ENCODE measurements at regions of chr9 and their contacts with region 1.

Region 1: DNA sequence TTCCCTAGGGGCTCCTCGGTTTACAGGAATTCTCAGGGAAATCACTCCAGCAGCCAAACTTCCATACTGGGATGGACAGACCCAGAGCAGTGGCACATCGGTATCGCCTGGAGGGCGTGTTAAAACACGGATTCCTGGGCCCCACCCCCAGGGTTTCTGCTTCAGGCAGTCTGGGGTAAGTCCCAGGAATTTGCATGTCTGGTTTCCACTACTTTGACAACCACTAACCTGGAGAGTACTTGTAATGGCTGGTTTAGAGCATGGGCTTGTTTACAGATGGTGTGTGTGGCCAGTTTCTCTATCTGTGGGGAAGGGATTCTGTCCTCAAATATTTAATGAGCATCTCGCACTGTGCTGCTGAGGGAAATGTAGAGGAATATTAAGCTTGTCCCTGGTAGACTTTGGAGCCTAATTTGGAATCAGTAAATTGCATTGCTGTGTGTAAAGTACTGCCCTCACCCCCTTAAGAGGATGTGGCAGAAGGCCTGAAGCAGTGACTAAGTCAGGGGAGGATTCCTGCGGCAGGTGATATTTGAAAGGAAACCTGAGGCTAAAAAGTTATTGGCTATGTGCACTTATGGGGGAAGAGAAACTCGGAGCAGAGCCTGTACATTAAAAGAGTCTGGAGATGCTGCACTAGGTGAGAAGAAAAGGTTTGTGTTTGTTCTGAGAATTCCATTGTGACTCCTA is 18.6 kb upstream of the TJP2 start:
- DNase-seq: no peak
- H3K4me3 ChIP-seq: no peak overlapping the region
- H3K27ac ChIP-seq: no peak overlapping the region
- H3K4me1 ChIP-seq: peaks cover 1% of the 10 kb centered on the region
- H3K27me3 ChIP-seq: no peaks in the 10 kb centered on the region
- CTCF ChIP-seq: no peak
- POLR2A ChIP-seq: no peak

Region 2: DNA sequence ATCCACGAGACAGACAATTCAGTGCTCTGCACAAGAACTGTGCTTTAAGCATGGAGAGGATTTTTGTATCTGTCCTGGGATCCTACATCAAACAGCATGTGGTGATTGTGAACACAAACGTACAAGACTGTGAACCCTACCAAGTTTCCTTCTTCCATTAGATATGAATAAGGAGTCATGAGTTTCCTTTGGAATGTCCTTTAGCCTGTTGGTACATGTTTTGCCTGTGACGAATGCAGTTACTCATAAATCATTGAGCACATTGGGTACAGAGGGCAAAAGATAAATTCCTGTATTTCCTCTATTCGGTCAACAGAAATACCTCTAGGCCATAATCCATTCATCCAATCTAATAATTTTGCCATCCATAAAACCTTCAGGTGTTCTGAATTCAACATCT is 58.4 kb before region 1 on chr9:
- CTCF ChIA-PET with region 1: no interaction called
- POLR2A ChIA-PET with region 1: interaction called, 12 read pairs
- dilution Hi-C with region 1: no loop called
- intact Hi-C with region 1: no loop called
- DNase-seq: peak; percentile 93
- H3K4me3 ChIP-seq: no peak overlapping the region
- H3K27ac ChIP-seq: peak overlapping the region; percentile 89
- H3K4me1 ChIP-seq: peaks cover 41% of the 10 kb centered on the region
- H3K27me3 ChIP-seq: no peaks in the 10 kb centered on the region
- CTCF ChIP-seq: no peak
- POLR2A ChIP-seq: peak; percentile 82

Region 3: DNA sequence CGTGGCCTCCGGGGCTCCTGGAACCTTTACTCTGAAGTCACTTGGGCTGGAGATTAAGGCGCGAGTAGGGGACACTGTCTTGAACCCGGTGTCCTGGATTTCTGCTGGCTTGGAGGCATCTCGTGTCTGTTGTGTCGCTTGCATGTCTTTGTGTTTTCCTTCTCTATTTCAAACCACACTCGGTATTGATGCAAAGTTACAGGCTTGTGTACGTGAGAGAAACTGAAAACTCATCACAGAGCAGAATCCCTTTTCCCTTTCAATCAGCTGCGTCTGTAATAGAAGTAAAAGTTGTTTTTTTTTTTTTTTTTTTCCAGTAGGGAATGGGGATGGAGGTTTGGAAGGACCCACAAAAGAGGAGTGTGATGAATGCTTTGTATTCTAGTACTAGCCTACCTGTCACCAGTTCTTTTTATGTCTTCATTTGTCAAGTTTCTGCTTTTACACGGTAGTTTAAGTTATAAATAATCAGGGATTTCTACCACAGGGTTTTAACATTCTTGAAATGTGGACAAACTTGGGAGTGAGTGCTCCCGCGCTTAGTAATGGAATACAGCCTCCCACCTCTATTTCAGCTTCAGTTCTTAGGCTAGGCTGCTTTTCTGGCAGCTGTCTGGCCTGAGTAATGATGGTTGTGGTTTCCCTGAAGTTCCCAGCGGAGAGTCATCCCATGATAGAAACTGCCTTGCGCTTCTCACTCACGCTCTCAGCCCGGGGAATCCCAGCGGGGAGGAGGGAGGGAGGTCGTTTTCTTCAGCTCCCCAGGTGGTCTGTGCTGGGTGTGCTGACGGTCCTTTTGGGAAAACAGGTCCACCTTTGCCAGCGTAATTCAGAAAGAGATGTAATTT is 19.4 kb after region 1 on chr9:
- CTCF ChIA-PET with region 1: interaction called, 38 read pairs
- POLR2A ChIA-PET with region 1: interaction called, 3 read pairs
- dilution Hi-C with region 1: no loop called
- intact Hi-C with region 1: no loop called
- DNase-seq: peak; percentile 57
- H3K4me3 ChIP-seq: peak overlapping the region; percentile 60 to 73 (median 64)
- H3K27ac ChIP-seq: peak overlapping the region; percentile 81
- H3K4me1 ChIP-seq: peaks cover 70% of the 10 kb centered on the region
- H3K27me3 ChIP-seq: no peaks in the 10 kb centered on the region
- CTCF ChIP-seq: no peak
- POLR2A ChIP-seq: no peak

Region 4: DNA sequence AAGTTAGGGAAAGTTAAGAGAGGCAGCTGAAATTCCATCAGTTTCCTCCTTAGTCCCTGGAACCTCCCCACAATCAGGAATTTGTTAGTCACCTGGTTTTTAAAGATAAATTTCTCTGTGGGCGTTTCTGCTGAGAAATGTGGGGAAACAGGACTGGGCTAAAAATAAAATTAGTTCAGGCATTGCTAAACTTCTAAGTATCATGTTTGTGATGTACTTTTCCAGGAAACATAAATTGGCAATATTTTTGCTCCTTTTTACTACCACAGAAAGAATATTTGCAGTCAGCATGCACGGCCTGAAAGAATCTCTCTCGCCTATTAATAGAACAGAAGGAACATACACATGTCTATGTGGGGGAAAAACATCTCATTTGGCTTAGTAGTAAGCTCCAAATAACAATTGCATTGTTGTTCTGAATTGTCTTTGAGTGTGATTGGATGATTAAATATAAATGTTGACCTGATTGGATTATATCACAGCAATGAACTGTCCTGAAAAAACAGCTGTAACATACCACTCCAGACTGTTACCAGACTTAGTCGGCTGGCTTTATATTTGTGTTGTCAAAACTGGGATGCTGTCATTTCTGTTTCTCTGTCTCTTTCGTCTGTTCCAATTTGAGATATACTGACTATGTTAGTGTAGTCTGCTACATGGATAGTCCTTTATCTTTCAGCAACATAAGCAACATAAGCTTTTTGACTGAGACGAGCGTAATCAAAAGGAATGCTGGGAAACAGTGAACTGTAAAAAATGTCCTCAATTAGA is 31.5 kb after region 1 on chr9:
- CTCF ChIA-PET with region 1: interaction called, 108 read pairs
- POLR2A ChIA-PET with region 1: no interaction called
- dilution Hi-C with region 1: no loop called
- intact Hi-C with region 1: loop called (anchors 2 kb)
- DNase-seq: peak; percentile 70
- H3K4me3 ChIP-seq: no peak overlapping the region
- H3K27ac ChIP-seq: peak overlapping the region; percentile 49
- H3K4me1 ChIP-seq: peaks cover 38% of the 10 kb centered on the region
- H3K27me3 ChIP-seq: no peaks in the 10 kb centered on the region
- CTCF ChIP-seq: no peak
- POLR2A ChIP-seq: no peak

Region 5: DNA sequence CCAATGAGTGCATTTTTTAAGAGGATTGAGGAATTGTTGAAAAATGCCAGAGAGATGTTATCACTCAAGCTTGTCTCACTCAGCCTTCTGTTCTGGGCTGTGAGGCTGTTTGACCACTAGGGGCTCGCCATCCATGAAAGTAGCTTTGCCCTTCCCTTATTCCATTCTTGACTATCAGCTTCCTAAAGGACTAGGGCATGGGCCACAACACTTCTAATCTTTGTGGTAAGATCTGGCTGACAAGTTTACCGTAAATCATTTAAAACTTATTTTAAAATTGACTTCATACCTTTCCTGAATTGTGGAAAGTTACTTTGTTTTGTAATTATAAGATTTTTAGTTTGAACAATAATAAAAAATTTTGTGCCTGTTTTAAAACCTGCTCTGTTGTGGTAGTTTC is 68.1 kb after region 1 on chr9:
- CTCF ChIA-PET with region 1: interaction called, 12 read pairs
- POLR2A ChIA-PET with region 1: no interaction called
- dilution Hi-C with region 1: no loop called
- intact Hi-C with region 1: no loop called
- DNase-seq: peak; percentile 74
- H3K4me3 ChIP-seq: no peak overlapping the region
- H3K27ac ChIP-seq: no peak overlapping the region
- H3K4me1 ChIP-seq: no peaks in the 10 kb centered on the region
- H3K27me3 ChIP-seq: no peaks in the 10 kb centered on the region
- CTCF ChIP-seq: peak; percentile 85
- POLR2A ChIP-seq: no peak

Region 6: DNA sequence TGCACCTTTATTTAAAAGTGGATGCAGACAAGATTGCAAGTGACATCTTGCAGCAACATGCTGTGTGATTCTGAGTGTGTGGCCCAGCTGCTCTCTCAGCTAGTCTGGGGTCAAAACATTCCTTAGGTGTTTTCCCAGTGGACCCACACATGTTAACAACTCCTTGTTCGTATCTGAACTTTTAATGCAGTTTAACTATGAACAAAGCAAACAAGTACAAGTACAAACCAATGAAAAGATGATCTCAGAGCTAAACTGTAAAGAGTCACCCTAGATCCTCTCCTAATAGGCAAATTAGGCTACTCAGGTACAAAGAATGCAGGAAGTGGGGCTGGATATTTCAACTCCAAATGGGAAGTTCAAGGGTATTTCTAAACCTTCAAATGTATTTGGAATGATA is 277.9 kb after region 1 on chr9:
- CTCF ChIA-PET with region 1: no interaction called
- POLR2A ChIA-PET with region 1: no interaction called
- dilution Hi-C with region 1: no loop called
- intact Hi-C with region 1: no loop called
- DNase-seq: no peak
- H3K4me3 ChIP-seq: no peak overlapping the region
- H3K27ac ChIP-seq: no peak overlapping the region
- H3K4me1 ChIP-seq: no peaks in the 10 kb centered on the region
- H3K27me3 ChIP-seq: no peaks in the 10 kb centered on the region
- CTCF ChIP-seq: no peak
- POLR2A ChIP-seq: no peak

Measured in endothelial cell of umbilical vein (primary cell).